Activated T-helper 2 cell treated with anti-CD3 and anti-CD28 coated beads, Interferon-gamma antibody, Interleukin-2, Interleukin-4, amounts not matched to agents 10 μg/mL and 5 μg/mL and 100 μg/mL, durations not matched to agents 14 hours and 24 hours and 36 hours (primary cell): ENCODE measurements at regions of chr4 and their contacts with region 1.

Region 1: GRCh38 chr4:83110223-83110945 is 4.1 kb downstream of the PLAC8 start:
- DNase-seq: peak; percentile 84
- H3K4me3 Mint-ChIP-seq: peak overlapping the region; percentile 84
- H3K27ac Mint-ChIP-seq: peak overlapping the region; percentile 91
- H3K4me1 Mint-ChIP-seq: peaks cover 48% of the 10 kb centered on the region
- H3K27me3 Mint-ChIP-seq: peaks cover 2% of the 10 kb centered on the region

Region 2: DNA sequence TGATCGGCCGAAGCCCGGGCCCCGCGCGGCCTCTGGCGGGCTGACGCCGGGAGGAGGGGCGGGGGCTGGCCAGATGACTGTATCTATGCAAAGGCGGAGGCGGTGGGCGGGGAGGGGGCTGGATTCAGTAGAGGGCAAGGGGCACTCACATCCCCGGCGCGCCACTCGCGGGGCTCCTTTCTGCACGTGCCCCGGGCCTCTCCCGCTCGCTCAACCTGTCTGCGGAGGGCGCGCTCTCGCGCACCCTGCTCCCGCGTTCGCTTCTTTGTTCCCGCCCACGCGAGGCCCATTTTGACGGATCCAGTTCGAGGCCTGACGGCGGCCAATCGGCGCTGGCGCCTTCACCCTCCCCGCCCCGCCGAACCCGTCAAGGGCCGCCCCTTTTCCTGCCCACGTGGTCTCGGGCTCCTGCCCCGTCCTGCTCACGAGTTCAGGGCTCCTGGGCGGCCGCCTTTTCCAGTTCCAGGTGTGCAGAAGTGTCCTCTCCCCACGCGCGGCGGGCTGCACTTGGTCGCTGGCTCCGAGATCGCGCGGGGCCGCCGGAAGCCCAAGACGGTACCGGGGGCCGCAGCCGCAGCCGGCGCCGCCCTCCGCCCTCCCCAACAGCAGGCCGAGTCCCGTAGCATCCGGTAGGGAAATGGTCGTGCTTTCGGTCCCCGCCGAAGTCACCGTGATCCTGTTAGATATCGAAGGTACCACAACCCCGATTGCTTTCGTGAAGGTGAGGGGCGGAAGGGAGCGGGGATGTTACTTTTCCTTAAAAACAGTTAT is 680.0 kb before region 1 on chr4 and contains the starts of genes ENOPH1 and HNRNPDL:
- intact Hi-C with region 1: loop called (anchors 10 kb)
- DNase-seq: peak; percentile 96
- H3K4me3 Mint-ChIP-seq: peak within 1 kb of the TSS; percentile 98
- H3K27ac Mint-ChIP-seq: peak within 1 kb of the TSS; percentile 99
- H3K4me1 Mint-ChIP-seq: peaks cover 44% of the 10 kb centered on the region
- H3K27me3 Mint-ChIP-seq: no peaks in the 10 kb centered on the region
- total RNA-seq, gene ENOPH1: 64.5 and 65.9 TPM in 2 replicates
- total RNA-seq, gene HNRNPDL: 470 and 486 TPM in 2 replicates

Region 3: GRCh38 chr4:83074086-83074704 is 36.2 kb before region 1 on chr4:
- intact Hi-C with region 1: loop called (anchors 1 kb)
- DNase-seq: peak; percentile 62
- H3K4me3 Mint-ChIP-seq: no peak overlapping the region
- H3K27ac Mint-ChIP-seq: no peak overlapping the region
- H3K4me1 Mint-ChIP-seq: peaks cover 26% of the 10 kb centered on the region
- H3K27me3 Mint-ChIP-seq: no peaks in the 10 kb centered on the region

Region 4: GRCh38 chr4:83128240-83128929 is 18.0 kb after region 1 on chr4:
- intact Hi-C with region 1: loop called (anchors 2 kb)
- DNase-seq: no peak
- H3K4me3 Mint-ChIP-seq: no peak overlapping the region
- H3K27ac Mint-ChIP-seq: no peak overlapping the region
- H3K4me1 Mint-ChIP-seq: peaks cover 16% of the 10 kb centered on the region
- H3K27me3 Mint-ChIP-seq: peaks cover 5% of the 10 kb centered on the region

Region 5: DNA sequence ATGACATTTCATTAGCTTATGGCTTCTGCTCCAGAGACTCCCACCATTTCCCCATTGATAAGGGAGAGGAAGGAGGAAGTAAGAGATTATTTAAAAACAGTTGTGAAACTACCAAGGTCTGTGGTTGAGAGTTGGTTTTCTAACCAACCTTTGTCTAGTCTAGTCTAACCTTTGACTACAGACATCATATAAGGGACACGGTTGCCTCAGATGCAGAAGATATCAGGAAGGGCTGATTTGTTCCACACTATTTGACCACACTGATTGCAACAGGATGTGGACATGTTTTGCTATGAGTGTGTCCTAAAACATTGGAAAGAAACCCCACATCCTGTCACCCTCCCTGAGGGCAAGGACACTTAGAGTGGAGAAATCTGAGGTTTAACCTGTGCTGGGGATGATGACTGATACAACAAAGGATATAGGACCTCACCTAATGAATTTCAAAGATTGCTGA is 121.3 kb after region 1 on chr4:
- intact Hi-C with region 1: loop called (anchors 1 kb)
- DNase-seq: peak; percentile 60
- H3K4me3 Mint-ChIP-seq: no peak overlapping the region
- H3K27ac Mint-ChIP-seq: peak overlapping the region; percentile 2
- H3K4me1 Mint-ChIP-seq: peaks cover 54% of the 10 kb centered on the region
- H3K27me3 Mint-ChIP-seq: peaks cover 33% of the 10 kb centered on the region

Region 6: DNA sequence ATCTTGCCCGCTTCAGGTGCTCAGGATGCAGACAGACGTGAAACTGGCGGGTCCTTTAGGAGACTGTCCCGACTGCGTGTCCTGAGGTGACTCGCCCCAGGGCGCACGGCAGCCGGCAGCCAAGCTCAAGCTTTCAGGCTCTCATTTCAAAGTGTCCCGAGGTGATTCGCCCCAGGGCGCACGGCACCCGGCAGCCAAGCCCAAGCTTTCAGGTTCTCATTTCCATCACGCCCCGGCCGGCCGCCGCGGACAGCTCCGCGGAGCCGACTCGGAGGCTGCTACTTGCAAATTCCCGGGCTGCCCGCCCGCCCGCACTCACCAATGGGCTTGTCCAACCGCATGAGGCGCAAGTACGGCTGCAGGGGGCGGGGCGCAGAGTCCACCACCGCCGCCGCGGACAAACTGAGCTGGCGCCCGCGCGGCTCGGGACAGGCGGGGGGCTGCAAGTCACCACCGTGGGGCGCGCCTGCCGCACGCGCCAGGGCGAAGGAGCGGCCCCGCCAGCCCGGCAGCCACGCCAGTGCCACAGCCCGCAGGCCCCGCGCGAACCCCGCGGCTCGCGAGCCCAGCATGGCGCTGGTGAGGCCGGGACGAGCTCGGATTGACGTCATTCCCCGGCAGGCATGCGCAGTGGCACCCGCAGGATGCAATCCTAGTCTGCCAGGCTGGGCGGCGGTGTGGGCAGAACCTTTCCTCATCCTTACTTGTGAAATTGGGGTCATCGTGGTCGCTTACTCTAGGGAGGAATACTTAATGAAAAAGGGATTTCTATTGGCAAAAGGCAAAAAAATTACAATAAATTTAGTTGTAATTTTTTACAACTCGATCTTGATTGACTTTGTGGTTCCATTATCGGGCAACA is 174.0 kb after region 1 on chr4 and contains the start of gene COQ2:
- intact Hi-C with region 1: loop called (anchors 1 kb)
- DNase-seq: peak; percentile 91
- H3K4me3 Mint-ChIP-seq: peak within 1 kb of the TSS; percentile 90
- H3K27ac Mint-ChIP-seq: peak within 1 kb of the TSS; percentile 95
- H3K4me1 Mint-ChIP-seq: peaks cover 45% of the 10 kb centered on the region
- H3K27me3 Mint-ChIP-seq: peaks cover 2% of the 10 kb centered on the region
- total RNA-seq, gene COQ2: 19.5 and 20.6 TPM in 2 replicates

Region 7: GRCh38 chr4:83455281-83456129 is 345.1 kb after region 1 on chr4 and contains the starts of genes HELQ and MRPS18C:
- intact Hi-C with region 1: loop called (anchors 5 kb)
- DNase-seq: peak; percentile 95
- H3K4me3 Mint-ChIP-seq: peak within 1 kb of the TSS; percentile 97
- H3K27ac Mint-ChIP-seq: peak within 1 kb of the TSS; percentile 98
- H3K4me1 Mint-ChIP-seq: peaks cover 34% of the 10 kb centered on the region
- H3K27me3 Mint-ChIP-seq: no peaks in the 10 kb centered on the region
- total RNA-seq, gene HELQ: 11.0 and 11.9 TPM in 2 replicates
- total RNA-seq, gene MRPS18C: 72.2 and 73.8 TPM in 2 replicates